Body of pancreas (tissue), 4 donors: ENCODE measurements at regions of chr4 and their contacts with region 1.

Region 1: GRCh38 chr4:21469438-21470300 is 478.9 kb downstream of the KCNIP4 start:
- DNase-seq: no peak
- ATAC-seq: no peak
- H3K4me3 ChIP-seq: no peak overlapping the region
- H3K27ac ChIP-seq: no peak overlapping the region
- H3K4me1 ChIP-seq: no peaks in the 10 kb centered on the region
- H3K27me3 ChIP-seq: no peaks in the 10 kb centered on the region
- CTCF ChIP-seq: peak; percentile 39 to 65 (median 53)
- POLR2A ChIP-seq: no peak

Region 2: GRCh38 chr4:20773144-20773997 is 696.3 kb before region 1 on chr4:
- intact Hi-C with region 1: loop called (anchors 10 kb)
- DNase-seq: peak; percentile 37 to 53 (median 42)
- ATAC-seq: peak; percentile 68
- H3K4me3 ChIP-seq: no peak overlapping the region
- H3K27ac ChIP-seq: no peak overlapping the region
- H3K4me1 ChIP-seq: peaks cover 6% of the 10 kb centered on the region
- H3K27me3 ChIP-seq: no peaks in the 10 kb centered on the region
- CTCF ChIP-seq: peak; percentile 38 to 69 (median 64)
- POLR2A ChIP-seq: no peak